ENCODE measurements at regions of chr5 and their contacts with region 1.

Region 1: GRCh38 chr5:149667084-149667828 is 62.9 kb upstream of the PPARGC1B start:
- DNase-seq: peak; percentile 38
- ATAC-seq: peak; percentile 90
- H3K4me3 ChIP-seq: no peak overlapping the region
- H3K27ac ChIP-seq: no peak overlapping the region
- H3K4me1 ChIP-seq: no peaks in the 10 kb centered on the region
- H3K27me3 ChIP-seq: no peaks in the 10 kb centered on the region; a peak in 1 of 4 replicates
- CTCF ChIP-seq: peak; percentile 74 to 95 (median 83)
- EP300 ChIP-seq: no peak
- POLR2A ChIP-seq: no peak
- RAD21 ChIP-seq: peak; percentile 75

Region 2: GRCh38 chr5:149099920-149100319 is 567.3 kb before region 1 on chr5:
- CTCF ChIA-PET with region 1: no interaction called
- POLR2A ChIA-PET with region 1: no interaction called
- RAD21 ChIA-PET with region 1: no interaction called
- SMC1A ChIA-PET with region 1: no interaction called
- in situ Hi-C with region 1: no loop called
- intact Hi-C with region 1: no loop called
- DNase-seq: no peak
- ATAC-seq: no peak
- H3K4me3 ChIP-seq: no peak overlapping the region
- H3K27ac ChIP-seq: no peak overlapping the region
- H3K4me1 ChIP-seq: no peaks in the 10 kb centered on the region
- H3K27me3 ChIP-seq: no peaks in the 10 kb centered on the region
- CTCF ChIP-seq: no peak
- EP300 ChIP-seq: no peak
- POLR2A ChIP-seq: no peak
- RAD21 ChIP-seq: no peak

Region 3: DNA sequence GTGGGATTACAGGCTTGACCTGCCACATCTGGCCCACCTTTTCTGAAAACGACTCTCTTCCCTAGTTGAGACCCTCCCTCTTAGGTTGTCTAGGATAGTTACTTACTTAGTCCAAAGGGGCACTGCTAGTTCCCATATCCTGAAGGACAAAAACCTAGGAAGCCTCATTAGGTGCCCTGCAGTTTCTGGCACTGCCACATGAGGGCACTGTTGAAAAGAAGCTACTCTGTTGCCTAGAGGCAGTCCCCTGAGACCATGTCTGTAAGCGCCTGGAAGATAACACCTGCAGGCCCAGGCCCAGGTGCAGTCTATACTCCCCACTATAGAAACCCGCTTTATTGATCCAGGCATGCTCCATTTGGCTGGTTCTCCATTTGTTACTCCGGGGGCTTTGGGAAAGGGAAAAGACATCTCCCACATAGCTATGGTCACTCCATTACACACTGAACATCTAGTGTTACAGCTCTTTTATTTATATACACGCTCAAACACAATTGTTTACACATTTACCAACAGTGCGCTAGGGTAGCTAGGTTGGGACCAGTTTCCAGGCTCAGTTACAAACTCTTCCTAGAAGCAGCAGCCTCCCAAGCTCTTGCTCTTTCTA is 10.6 kb before region 1 on chr5:
- CTCF ChIA-PET with region 1: interaction called, 51 read pairs
- POLR2A ChIA-PET with region 1: interaction called, 4 read pairs
- RAD21 ChIA-PET with region 1: interaction called, 14 read pairs
- SMC1A ChIA-PET with region 1: interaction called, 6 read pairs
- in situ Hi-C with region 1: no loop called
- intact Hi-C with region 1: no loop called
- DNase-seq: no peak
- ATAC-seq: peak; percentile 73
- H3K4me3 ChIP-seq: no peak overlapping the region
- H3K27ac ChIP-seq: no peak overlapping the region
- H3K4me1 ChIP-seq: no peaks in the 10 kb centered on the region
- H3K27me3 ChIP-seq: no peaks in the 10 kb centered on the region; a peak in 1 of 4 replicates
- CTCF ChIP-seq: peak; percentile 72 to 83 (median 76)
- EP300 ChIP-seq: no peak
- POLR2A ChIP-seq: no peak
- RAD21 ChIP-seq: peak; percentile 69

Region 4: GRCh38 chr5:149740866-149741459 is 73.7 kb after region 1 on chr5:
- CTCF ChIA-PET with region 1: interaction called, 25 read pairs
- POLR2A ChIA-PET with region 1: interaction called, 4 read pairs
- RAD21 ChIA-PET with region 1: no interaction called
- SMC1A ChIA-PET with region 1: interaction called, 5 read pairs
- in situ Hi-C with region 1: no loop called
- intact Hi-C with region 1: no loop called
- DNase-seq: no peak
- ATAC-seq: no peak
- H3K4me3 ChIP-seq: no peak overlapping the region
- H3K27ac ChIP-seq: no peak overlapping the region
- H3K4me1 ChIP-seq: no peaks in the 10 kb centered on the region; the same call in 1 of the 2 replicates
- H3K27me3 ChIP-seq: no peaks in the 10 kb centered on the region
- CTCF ChIP-seq: no peak
- EP300 ChIP-seq: no peak
- POLR2A ChIP-seq: no peak
- RAD21 ChIP-seq: no peak

Region 5: DNA sequence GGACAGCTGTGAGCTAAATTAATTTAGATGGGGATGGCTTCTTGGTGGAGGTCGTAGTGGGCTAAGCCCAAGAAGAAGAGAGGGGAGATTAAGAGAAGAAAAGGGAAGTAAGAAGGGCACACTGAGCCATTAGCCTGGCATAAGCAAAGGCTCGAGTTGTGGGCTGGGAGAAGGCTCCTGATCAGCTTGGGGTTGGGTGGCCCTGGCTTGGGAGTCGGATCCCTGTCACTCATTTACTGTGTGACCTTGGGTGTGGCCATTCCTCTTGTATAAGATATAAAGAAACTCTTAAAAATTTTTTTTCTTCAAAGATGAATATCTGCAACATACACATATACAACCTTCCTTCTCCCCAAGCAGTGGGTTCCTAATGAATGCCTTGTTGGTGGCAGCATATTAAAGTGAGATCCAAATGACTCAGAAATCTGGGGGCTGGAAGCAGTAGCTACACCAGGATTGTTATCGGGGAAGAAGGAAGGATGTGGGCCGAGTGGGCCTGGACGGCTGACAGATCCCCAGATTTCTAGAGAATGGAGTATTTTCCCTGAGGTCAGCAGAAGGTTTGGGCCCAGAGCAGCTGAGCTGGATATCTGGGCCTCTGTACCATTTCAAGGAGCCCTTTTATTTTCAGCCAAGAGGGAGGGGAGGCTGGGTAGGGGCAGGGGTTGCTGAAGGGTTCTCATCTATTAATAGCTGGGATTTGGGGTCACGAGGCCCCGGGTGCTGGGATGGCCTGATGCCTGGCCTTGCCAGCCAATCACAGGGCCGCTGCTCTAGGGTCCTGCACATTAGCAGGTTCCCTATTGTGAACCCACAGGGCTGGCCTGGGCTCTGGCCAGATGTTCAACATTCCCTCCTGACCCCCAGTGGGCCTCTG is 115.0 kb after region 1 on chr5:
- CTCF ChIA-PET with region 1: interaction called, 85 read pairs
- POLR2A ChIA-PET with region 1: interaction called, 16 read pairs
- RAD21 ChIA-PET with region 1: interaction called, 47 read pairs
- SMC1A ChIA-PET with region 1: interaction called, 53 read pairs
- in situ Hi-C with region 1: no loop called
- intact Hi-C with region 1: loop called (anchors 5 kb)
- DNase-seq: no peak
- ATAC-seq: no peak
- H3K4me3 ChIP-seq: no peak overlapping the region
- H3K27ac ChIP-seq: peak overlapping the region; percentile 13; the same call in 1 of the 2 replicates
- H3K4me1 ChIP-seq: peaks cover 48% of the 10 kb centered on the region
- H3K27me3 ChIP-seq: no peaks in the 10 kb centered on the region
- CTCF ChIP-seq: no peak
- EP300 ChIP-seq: no peak
- POLR2A ChIP-seq: no peak
- RAD21 ChIP-seq: no peak

Region 6: GRCh38 chr5:149822301-149822700 is 155.0 kb after region 1 on chr5:
- CTCF ChIA-PET with region 1: interaction called, 349 read pairs
- POLR2A ChIA-PET with region 1: interaction called, 6 read pairs
- RAD21 ChIA-PET with region 1: interaction called, 91 read pairs
- SMC1A ChIA-PET with region 1: interaction called, 210 read pairs
- in situ Hi-C with region 1: loop called (anchors 5 kb)
- intact Hi-C with region 1: no loop called
- DNase-seq: no peak
- ATAC-seq: no peak
- H3K4me3 ChIP-seq: no peak overlapping the region
- H3K27ac ChIP-seq: no peak overlapping the region
- H3K4me1 ChIP-seq: no peaks in the 10 kb centered on the region
- H3K27me3 ChIP-seq: no peaks in the 10 kb centered on the region
- CTCF ChIP-seq: no peak
- EP300 ChIP-seq: no peak
- POLR2A ChIP-seq: no peak
- RAD21 ChIP-seq: no peak

Region 7: GRCh38 chr5:149865746-149866145 is 198.5 kb after region 1 on chr5:
- CTCF ChIA-PET with region 1: no interaction called
- POLR2A ChIA-PET with region 1: no interaction called
- RAD21 ChIA-PET with region 1: no interaction called
- SMC1A ChIA-PET with region 1: no interaction called
- in situ Hi-C with region 1: no loop called
- intact Hi-C with region 1: no loop called
- DNase-seq: no peak
- ATAC-seq: no peak
- H3K4me3 ChIP-seq: no peak overlapping the region
- H3K27ac ChIP-seq: no peak overlapping the region
- H3K4me1 ChIP-seq: peaks cover 7% of the 10 kb centered on the region
- H3K27me3 ChIP-seq: no peaks in the 10 kb centered on the region
- CTCF ChIP-seq: no peak
- EP300 ChIP-seq: no peak
- POLR2A ChIP-seq: no peak
- RAD21 ChIP-seq: no peak

Region 8: GRCh38 chr5:149990518-149991376 is 323.5 kb after region 1 on chr5:
- CTCF ChIA-PET with region 1: interaction called, 11 read pairs
- POLR2A ChIA-PET with region 1: no interaction called
- RAD21 ChIA-PET with region 1: interaction called, 4 read pairs
- SMC1A ChIA-PET with region 1: interaction called, 4 read pairs
- in situ Hi-C with region 1: no loop called
- intact Hi-C with region 1: no loop called
- DNase-seq: peak; percentile 26
- ATAC-seq: peak; percentile 95
- H3K4me3 ChIP-seq: no peak overlapping the region
- H3K27ac ChIP-seq: no peak overlapping the region
- H3K4me1 ChIP-seq: no peaks in the 10 kb centered on the region
- H3K27me3 ChIP-seq: no peaks in the 10 kb centered on the region
- CTCF ChIP-seq: peak; percentile 86 to 96 (median 92); a peak in 5 of 6 replicates
- EP300 ChIP-seq: no peak
- POLR2A ChIP-seq: no peak
- RAD21 ChIP-seq: peak; percentile 99